ENCODE measurements at regions of chr1 and their contacts with region 1.

Region 1: DNA sequence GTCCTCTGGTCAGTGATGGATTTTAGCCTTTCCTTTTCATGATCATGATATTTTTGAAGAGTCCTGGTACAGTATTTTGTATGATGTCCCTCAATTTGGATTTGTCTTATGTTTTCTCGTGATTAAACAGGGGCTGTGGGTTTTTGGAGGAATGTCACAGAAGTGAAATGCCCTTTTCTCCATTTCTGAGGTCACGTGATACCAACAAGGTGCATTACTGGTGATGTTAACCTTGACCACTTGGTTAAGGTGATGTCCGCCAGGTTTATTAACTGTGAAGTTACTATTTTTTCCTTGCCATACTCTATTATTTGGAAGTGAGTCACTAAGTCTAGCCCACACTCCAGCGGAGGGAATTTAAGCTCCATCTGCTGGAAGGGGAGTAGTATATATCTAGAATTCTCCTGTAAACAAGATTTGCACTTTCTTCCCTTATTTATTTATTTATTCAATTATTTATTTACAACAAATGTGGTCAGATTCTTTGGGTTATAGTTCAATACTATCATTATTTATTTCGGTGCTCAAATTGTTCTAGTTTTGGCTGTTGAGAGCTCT is 123.4 kb downstream of the HIVEP3 start:
- DNase-seq: no peak
- ATAC-seq: no peak

Region 2: DNA sequence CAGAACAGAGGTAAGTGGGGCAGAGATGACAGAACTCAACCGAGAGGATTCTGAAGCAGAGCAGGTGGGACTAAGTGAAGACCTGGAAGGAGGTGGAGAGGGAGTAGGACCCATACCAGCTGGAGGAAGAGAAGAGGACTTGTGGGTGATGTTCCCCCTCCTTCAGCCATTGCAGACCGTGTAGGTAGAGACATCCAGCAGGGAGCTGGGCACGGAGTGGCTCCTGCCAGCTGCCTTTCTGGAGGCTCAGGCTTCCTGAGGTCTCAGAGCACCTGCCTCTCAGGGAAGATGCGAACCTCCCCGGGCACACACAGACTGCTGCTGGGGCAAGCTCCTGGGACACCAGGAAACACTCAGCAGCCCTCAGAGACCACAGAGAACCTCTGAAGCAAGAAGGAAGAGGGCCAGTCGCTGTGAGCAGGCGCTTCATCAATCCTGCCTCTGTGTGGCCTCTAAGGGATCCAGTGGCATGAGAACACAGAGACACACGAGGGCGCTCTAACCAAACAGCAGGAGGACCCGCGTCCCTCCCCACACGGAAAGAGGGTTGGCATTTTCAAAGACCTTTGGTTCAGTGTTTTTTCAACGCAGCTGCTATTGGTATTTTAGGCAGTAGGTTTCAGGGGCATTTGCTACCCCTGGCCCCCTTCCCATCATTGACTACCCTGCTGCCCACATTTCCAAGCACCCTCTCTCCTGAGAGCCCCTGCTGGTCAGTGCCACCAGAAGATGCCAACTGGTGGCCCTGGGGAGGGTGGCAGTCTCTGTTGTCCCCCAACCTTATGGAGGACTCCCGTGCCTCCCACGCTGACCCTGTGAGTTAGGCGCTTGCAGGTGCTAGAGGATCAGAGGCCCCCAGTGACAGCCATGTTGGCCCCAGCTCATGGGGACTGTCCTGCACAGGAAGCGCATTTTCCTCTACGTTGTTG is 221.2 kb before region 1 on chr1:
- intact Hi-C with region 1: loop called (anchors 5 to 10 kb)
- DNase-seq: peak; percentile 85
- ATAC-seq: peak; percentile 92 to 96

Region 3: DNA sequence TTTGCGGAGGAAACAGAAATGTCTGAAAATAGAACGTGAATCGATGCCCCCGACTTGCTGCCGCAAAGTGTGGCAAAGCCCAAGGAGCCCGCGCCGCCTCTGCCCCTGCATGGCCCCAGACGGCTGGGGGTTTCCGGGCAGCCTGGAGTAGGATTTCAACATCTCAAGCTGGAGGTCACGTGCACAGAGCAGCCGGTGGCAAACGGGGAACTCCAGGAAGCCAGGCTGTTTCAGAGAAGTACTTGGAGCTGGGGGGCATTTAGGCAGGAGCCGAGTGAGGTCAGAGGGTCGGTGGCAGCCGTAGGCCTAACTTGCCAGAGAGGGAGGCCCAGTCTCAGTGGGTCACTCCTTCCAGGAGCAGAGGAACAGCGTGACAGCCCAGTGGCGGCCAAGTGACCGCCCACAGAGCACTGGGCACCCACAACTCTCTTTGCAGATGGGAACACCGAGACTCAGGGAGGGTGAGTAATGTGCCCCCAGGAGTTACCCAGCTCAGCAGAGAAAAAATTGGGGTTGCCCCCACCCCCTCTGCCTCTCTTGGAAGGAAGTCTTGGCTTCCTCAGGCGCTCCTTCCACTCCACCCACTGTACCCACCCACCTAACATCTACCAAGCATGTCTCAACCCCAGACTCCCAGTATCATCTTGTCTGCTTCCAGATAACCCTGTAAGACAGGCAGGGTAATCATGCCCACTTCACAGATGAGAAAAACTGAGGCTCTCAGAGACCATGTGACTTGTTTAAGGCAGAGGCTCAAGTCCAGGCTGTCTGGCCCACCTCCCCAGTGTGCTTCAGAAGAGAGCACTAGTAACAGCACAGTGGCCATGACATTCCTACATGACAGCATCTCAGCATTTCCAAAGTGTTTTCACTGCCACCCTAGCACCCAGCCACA is 56.0 kb before region 1 on chr1:
- intact Hi-C with region 1: loop called in 1 of 2 experiments (anchors 10 kb)
- DNase-seq: peak; percentile 76
- ATAC-seq: peak; percentile 71 to 85

Measured in left cardiac atrium (tissue), 4 donors.